Activated CD4-positive, alpha-beta T cell treated with anti-CD3 and anti-CD28 coated beads for 36 hours (primary cell): ENCODE measurements at regions of chr2 and their contacts with region 1.

Region 1: DNA sequence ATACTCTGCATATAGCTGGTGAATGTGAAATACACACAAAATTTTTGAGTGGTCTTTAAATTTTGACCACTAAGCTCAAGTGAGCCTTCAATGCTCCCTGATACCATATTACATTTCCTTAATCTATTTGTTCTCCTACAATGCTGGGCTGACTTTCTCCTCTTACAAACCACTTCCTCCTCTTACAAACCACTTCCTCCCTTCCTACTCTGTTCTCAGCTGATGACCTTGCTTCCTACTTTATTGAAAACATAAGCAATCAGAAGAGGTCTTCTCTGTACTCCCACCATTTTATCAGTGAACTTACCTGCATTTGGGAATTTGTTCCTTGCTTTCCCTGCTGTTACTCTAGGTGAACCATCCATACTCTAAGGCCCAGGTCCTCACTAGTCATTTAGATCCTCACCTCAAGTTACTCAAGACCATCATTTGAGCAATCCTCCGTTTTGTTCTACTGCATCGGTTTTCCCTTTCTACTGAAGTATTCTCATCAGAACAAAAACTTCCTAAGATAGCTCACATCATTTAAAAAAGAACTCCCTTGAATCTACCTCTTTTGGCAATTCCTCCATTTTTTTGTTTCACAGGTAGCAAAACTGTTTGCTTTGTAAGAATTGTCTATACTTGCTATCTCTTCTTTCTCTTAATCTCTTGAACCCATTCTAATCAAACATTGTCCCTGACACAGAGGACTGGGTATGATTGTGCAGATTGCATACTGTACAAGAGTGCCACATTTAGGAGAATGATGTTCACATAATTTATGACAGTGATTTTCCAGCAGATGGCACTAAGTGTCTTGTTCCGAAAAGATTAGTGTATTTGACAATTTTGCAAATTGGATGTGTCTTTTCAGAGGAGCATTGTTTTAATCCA is 96.5 kb downstream of the EPB41L5 start:
- DNase-seq: no peak
- ATAC-seq: peak; percentile 78
- H3K4me3 Mint-ChIP-seq: peak overlapping the region; percentile 3
- H3K27ac Mint-ChIP-seq: peak overlapping the region; percentile 88
- H3K4me1 Mint-ChIP-seq: peaks cover 28% of the 10 kb centered on the region
- H3K27me3 Mint-ChIP-seq: no peaks in the 10 kb centered on the region

Region 2: DNA sequence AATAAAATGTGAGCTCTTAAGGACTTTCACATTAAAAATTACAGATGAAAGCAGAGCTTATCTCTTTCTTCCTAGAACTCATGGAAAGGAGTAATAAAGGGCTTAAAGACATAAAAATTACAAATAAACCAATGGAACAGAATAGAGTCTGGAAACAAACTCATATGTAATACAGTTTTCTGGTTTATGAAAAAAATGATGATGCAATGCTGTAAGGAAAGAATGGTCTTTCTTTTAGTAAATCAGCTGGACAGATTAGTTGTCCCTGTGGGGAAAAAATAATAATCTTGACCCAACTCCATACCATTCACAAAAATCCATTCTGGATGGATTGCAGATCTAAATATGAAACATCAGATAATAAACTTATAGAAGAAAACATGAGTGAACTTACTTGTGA is 59.6 kb after region 1 on chr2:
- CTCF ChIA-PET with region 1: interaction called, 82 read pairs
- POLR2A ChIA-PET with region 1: no interaction called
- intact Hi-C with region 1: no loop called
- DNase-seq: no peak
- ATAC-seq: no peak
- H3K4me3 Mint-ChIP-seq: no peak overlapping the region
- H3K27ac Mint-ChIP-seq: no peak overlapping the region
- H3K4me1 Mint-ChIP-seq: no peaks in the 10 kb centered on the region
- H3K27me3 Mint-ChIP-seq: no peaks in the 10 kb centered on the region

Region 3: DNA sequence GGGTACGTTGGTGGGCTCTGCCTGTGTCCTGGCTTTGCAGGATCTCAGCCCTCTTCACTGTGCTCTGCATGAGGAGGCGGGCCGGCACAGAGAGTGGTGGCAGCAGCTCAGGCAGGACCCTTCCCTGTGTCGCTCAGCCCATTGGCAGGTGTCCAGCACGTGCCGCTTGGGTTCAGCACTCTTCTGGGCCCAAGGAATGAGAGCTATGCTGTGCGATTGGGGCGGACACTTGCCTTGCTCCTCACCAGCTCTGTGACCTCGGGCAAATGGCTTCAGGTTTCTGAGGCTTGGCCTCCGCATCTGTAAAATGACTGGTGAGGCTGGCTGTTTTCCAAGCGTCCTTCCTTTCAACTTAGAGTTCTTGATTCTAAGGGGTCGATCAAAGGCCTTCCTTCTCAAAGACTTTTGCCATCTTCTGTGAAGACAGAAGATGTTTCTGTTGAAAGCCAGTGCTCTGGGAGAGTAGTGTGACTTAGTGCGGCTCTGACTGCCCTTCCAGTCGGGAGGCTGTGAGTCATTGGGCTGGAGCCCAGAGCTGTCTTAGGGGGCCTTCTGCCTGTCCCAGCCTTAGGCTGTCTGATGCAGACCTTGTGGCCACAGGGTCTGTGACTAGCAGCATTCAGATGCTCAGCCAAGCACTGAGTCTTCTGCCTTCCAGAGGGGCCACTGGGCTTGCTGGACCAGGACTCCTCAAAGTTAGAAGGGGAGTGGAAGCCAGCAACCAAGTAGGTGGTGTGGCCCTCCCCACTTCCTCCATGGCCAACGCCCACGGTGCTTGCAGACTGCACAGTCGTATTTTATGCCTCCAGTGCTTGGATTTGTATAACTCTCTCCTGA is 661.9 kb after region 1 on chr2:
- CTCF ChIA-PET with region 1: no interaction called
- POLR2A ChIA-PET with region 1: no interaction called
- intact Hi-C with region 1: no loop called
- DNase-seq: no peak
- ATAC-seq: no peak
- H3K4me3 Mint-ChIP-seq: no peak overlapping the region
- H3K27ac Mint-ChIP-seq: no peak overlapping the region
- H3K4me1 Mint-ChIP-seq: no peaks in the 10 kb centered on the region
- H3K27me3 Mint-ChIP-seq: no peaks in the 10 kb centered on the region